B cell (primary cell): ENCODE measurements at regions of chr10 and their contacts with region 1.

Region 1: DNA sequence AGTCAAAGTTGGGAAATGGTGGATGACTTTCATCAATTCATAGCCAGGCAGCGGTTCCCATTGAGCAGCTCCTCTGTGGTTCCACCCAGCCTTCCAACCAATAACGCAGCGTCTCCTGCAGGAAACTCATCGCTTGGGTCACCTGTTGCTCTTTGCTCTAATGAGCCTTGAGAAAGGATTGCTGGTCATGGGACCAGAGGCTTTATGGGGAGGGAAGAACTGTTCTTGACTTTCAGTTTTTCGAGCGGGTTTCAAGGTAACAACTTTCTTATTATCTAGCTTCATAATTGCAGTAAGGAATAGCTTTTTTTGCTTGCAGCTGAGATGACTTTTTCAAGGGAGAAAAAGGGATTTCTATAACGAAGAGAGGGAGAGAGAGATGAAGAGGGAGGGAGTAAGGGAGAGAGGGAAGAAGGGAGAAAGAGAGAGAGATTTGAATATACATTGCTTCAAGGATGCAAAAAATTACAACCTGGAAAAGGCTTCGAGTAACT is 405 bp upstream of the ENTPD1 start:
- DNase-seq: peak; percentile 61
- ATAC-seq: no peak
- H3K4me3 ChIP-seq: peak overlapping the region; percentile 55 to 86 (median 68)
- H3K4me3 Mint-ChIP-seq: peak overlapping the region; percentile 99
- H3K27ac ChIP-seq: peak overlapping the region; percentile 58 to 94
- H3K27ac Mint-ChIP-seq: peak overlapping the region; percentile 97
- H3K4me1 ChIP-seq: peaks cover 49 to 52% of the 10 kb centered on the region in 2 donors
- H3K4me1 Mint-ChIP-seq: peaks cover 56% of the 10 kb centered on the region
- H3K27me3 ChIP-seq: no peaks in the 10 kb centered on the region
- H3K27me3 Mint-ChIP-seq: no peaks in the 10 kb centered on the region
- CTCF ChIP-seq: no peak

Region 2: DNA sequence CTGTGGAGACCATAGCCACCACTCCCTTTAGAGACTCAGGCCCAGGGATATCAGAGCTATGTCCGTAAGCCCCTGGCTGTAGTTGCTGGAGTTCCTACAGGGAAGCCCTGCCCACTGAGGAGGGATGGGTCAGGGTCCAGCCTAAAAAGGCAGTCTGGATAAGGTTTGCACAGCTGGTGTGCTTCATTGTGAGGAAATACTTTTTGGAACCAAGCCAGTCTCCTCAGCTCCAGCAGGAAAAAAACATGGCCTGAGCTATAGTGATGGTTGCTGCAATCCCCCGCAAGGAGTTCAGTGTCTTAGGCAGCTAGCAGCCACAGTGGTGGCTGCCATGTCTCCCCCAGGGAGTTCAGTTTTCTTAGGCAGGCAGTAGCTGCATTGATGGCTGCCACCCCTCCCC is 633.7 kb before region 1 on chr10:
- CTCF ChIA-PET with region 1: no interaction called
- POLR2A ChIA-PET with region 1: no interaction called
- intact Hi-C with region 1: no loop called
- DNase-seq: no peak
- ATAC-seq: no peak
- H3K4me3 ChIP-seq: no peak overlapping the region
- H3K4me3 Mint-ChIP-seq: no peak overlapping the region
- H3K27ac ChIP-seq: no peak overlapping the region
- H3K27ac Mint-ChIP-seq: no peak overlapping the region
- H3K4me1 ChIP-seq: no peaks in the 10 kb centered on the region
- H3K4me1 Mint-ChIP-seq: no peaks in the 10 kb centered on the region
- H3K27me3 ChIP-seq: peaks cover 0 to 11% (median 2%) of the 10 kb centered on the region in 4 experiments
- H3K27me3 Mint-ChIP-seq: peaks cover 45% of the 10 kb centered on the region
- CTCF ChIP-seq: no peak

Region 3: DNA sequence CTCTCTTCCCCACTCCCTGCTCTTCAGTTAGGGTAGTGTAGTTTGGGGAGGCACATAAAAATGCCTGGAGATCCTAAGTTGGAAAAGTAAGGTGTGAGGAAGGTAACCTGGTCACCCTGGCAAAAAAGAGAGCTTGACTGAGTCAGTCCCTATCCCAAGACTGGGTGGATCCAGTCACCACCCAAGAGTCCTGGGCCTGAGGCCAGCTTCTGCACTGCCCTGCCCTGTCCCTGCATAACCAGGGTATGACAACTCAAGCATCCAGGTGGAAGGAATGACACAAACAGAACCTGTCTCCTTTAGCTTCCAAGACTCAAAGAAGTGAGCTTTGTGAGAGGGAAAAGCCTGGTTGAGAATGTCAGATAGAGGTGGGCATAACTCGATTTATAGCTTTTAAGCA is 167.5 kb before region 1 on chr10:
- CTCF ChIA-PET with region 1: no interaction called
- POLR2A ChIA-PET with region 1: no interaction called
- intact Hi-C with region 1: no loop called
- DNase-seq: no peak
- ATAC-seq: no peak
- H3K4me3 ChIP-seq: no peak overlapping the region
- H3K4me3 Mint-ChIP-seq: no peak overlapping the region
- H3K27ac ChIP-seq: no peak overlapping the region
- H3K27ac Mint-ChIP-seq: no peak overlapping the region
- H3K4me1 ChIP-seq: no peaks in the 10 kb centered on the region
- H3K4me1 Mint-ChIP-seq: no peaks in the 10 kb centered on the region
- H3K27me3 ChIP-seq: peaks cover 0 to 8% (median 0%) of the 10 kb centered on the region in 4 experiments
- H3K27me3 Mint-ChIP-seq: peaks cover 9% of the 10 kb centered on the region
- CTCF ChIP-seq: no peak

Region 4: DNA sequence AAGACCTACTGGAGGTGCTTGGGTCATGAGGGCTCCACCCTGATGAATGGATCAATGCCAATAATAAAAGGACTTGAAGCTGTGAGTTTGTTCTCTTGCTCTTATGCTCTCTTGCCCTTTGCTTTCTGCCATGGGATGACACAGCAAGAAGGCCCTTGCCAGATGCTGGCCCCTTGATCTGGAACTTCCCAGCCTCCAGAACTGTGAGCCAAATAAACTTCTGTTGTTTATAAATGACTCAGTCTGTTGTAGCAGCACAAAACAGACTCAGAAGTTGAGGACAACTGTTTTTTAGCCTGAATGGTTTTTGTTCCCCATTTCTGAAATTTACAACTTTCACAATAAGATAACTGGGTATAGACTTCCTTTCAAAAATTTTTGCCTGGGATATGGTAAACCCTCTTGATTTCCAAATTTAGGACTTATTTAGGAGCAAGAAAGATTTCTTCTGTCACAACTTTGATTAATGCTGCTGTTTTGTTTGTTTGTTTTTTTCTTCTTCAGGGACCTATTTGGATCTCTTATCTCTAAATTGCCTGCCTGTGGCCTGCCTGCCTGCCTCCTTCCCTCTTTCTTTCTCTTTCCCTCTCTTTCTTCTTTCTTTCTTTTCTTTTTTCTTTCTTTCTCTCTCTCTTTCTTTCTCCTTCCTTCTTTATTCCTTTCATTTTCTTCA is 12.5 kb after region 1 on chr10:
- CTCF ChIA-PET with region 1: interaction called, 13 read pairs
- POLR2A ChIA-PET with region 1: interaction called, 12 read pairs
- intact Hi-C with region 1: loop called (anchors 1 kb)
- DNase-seq: peak; percentile 73
- ATAC-seq: peak; percentile 82
- H3K4me3 ChIP-seq: peak overlapping the region in 1 of 5 experiments; percentile 18
- H3K4me3 Mint-ChIP-seq: peak overlapping the region; percentile 66
- H3K27ac ChIP-seq: peak overlapping the region; percentile 72 to 90
- H3K27ac Mint-ChIP-seq: peak overlapping the region; percentile 95
- H3K4me1 ChIP-seq: peaks cover 50 to 64% of the 10 kb centered on the region in 2 donors
- H3K4me1 Mint-ChIP-seq: peaks cover 71% of the 10 kb centered on the region
- H3K27me3 ChIP-seq: no peaks in the 10 kb centered on the region
- H3K27me3 Mint-ChIP-seq: no peaks in the 10 kb centered on the region
- CTCF ChIP-seq: no peak

Region 5: DNA sequence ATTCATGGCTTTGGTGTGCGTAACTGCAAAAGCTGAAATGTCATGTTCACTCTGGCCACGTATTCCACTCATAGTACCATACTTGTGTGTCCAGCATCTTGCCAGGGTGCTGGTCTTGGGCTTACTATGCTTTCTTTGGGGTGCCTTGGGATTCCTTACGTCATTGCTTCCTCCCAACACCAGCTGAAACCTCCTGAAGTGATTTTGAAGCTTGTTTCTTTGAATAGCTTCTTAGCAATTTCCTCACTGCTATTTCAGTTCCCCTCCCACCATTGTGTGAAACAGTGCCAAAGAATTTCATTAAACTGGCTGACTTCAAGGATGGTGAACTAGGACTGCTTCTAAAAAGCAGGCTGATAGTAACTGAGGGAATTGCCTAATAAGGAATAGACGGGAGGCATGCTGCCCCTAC is 37.3 kb after region 1 on chr10:
- CTCF ChIA-PET with region 1: interaction called, 12 read pairs
- POLR2A ChIA-PET with region 1: interaction called, 5 read pairs
- intact Hi-C with region 1: loop called (anchors 2 kb)
- DNase-seq: peak; percentile 43
- ATAC-seq: no peak
- H3K4me3 ChIP-seq: peak overlapping the region in 1 of 5 experiments; percentile 21
- H3K4me3 Mint-ChIP-seq: peak overlapping the region; percentile 38
- H3K27ac ChIP-seq: peak overlapping the region; percentile 83 to 85
- H3K27ac Mint-ChIP-seq: peak overlapping the region; percentile 91
- H3K4me1 ChIP-seq: peaks cover 69 to 74% of the 10 kb centered on the region in 2 donors
- H3K4me1 Mint-ChIP-seq: peaks cover 87% of the 10 kb centered on the region
- H3K27me3 ChIP-seq: no peaks in the 10 kb centered on the region
- H3K27me3 Mint-ChIP-seq: no peaks in the 10 kb centered on the region
- CTCF ChIP-seq: no peak

Region 6: GRCh38 chr10:95832216-95833041 is 76.9 kb after region 1 on chr10:
- CTCF ChIA-PET with region 1: interaction called, 279 read pairs
- POLR2A ChIA-PET with region 1: interaction called, 47 read pairs
- intact Hi-C with region 1: loop called (anchors 1 kb)
- DNase-seq: peak; percentile 94
- ATAC-seq: peak; percentile 89
- H3K4me3 ChIP-seq: peak overlapping the region in 3 of 5 experiments; percentile 11 to 36 (median 23)
- H3K4me3 Mint-ChIP-seq: peak overlapping the region; percentile 83
- H3K27ac ChIP-seq: peak overlapping the region; percentile 89 to 95
- H3K27ac Mint-ChIP-seq: peak overlapping the region; percentile 96
- H3K4me1 ChIP-seq: peaks cover 82 to 87% of the 10 kb centered on the region in 2 donors
- H3K4me1 Mint-ChIP-seq: peaks cover 82% of the 10 kb centered on the region
- H3K27me3 ChIP-seq: no peaks in the 10 kb centered on the region
- H3K27me3 Mint-ChIP-seq: no peaks in the 10 kb centered on the region
- CTCF ChIP-seq: no peak

Region 7: DNA sequence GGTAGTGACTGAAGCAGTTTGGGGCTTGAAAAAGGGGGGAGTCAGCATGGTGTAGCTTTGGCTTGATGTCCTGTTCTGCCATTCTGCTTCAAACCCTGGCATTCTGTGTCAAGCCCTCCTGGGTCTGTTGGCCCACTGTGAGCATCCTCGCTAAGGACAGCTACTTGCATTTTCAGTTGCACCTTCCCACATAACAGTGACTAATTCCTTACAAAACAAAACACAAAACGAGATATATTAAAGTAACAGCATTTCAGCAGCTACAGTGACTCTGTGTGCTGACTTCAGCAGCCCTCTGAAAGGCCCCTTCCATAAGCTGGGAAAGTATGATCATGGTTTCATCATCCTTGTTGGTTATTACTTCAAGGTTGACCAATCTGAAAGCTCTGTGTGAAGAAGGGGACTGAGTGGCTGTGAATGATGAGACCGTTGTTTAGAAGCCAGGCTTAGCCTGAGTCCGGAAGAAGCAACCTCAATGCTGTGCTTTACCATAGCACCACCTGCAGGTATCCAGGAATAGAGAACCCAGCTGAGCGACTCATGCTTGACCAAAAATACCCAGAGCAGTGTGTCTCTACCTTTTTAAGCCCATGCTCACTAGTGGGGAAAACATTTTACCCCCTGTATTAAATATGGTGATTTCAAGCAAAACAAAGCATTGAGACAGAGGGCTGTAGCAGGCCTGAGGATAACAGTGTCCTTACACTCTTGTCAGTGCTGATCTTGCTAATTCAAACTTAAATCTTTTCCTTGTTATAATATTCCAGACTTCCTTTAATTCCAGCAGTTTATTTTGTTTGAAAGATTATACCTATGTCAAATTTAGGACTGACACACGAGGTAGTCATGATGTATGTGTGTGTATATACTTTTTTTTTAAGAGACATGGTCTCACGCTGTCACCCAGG is 109.6 kb after region 1 on chr10:
- CTCF ChIA-PET with region 1: interaction called, 37 read pairs
- POLR2A ChIA-PET with region 1: no interaction called
- intact Hi-C with region 1: no loop called
- DNase-seq: peak; percentile 83
- ATAC-seq: peak; percentile 99
- H3K4me3 ChIP-seq: no peak overlapping the region
- H3K4me3 Mint-ChIP-seq: no peak overlapping the region
- H3K27ac ChIP-seq: peak overlapping the region; percentile 26 to 75
- H3K27ac Mint-ChIP-seq: peak overlapping the region; percentile 88
- H3K4me1 ChIP-seq: peaks cover 11 to 13% of the 10 kb centered on the region in 2 donors
- H3K4me1 Mint-ChIP-seq: peaks cover 23% of the 10 kb centered on the region
- H3K27me3 ChIP-seq: no peaks in the 10 kb centered on the region
- H3K27me3 Mint-ChIP-seq: no peaks in the 10 kb centered on the region
- CTCF ChIP-seq: peak; percentile 88

Region 8: DNA sequence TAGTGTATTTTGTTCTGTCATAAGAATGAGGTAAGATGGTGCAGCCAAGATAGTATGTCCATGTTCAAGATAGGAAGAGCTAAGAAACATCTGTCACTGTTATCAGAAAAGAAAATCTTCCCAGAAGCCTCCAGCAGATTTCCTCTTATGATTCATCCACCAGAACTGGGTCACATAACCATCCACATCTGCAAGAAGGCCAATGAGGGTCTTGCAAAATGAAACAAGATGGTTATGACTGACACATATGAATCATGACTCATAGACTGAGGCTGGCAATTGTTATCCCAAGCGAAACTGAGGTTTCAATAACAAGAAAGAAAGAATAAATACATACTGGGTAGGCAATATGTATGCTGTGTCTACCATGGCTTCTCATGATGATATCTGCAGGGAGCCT is 318.2 kb after region 1 on chr10:
- CTCF ChIA-PET with region 1: no interaction called
- POLR2A ChIA-PET with region 1: no interaction called
- intact Hi-C with region 1: no loop called
- DNase-seq: no peak
- ATAC-seq: no peak
- H3K4me3 ChIP-seq: no peak overlapping the region
- H3K4me3 Mint-ChIP-seq: no peak overlapping the region
- H3K27ac ChIP-seq: no peak overlapping the region
- H3K27ac Mint-ChIP-seq: no peak overlapping the region
- H3K4me1 ChIP-seq: no peaks in the 10 kb centered on the region
- H3K4me1 Mint-ChIP-seq: no peaks in the 10 kb centered on the region
- H3K27me3 ChIP-seq: no peaks in the 10 kb centered on the region
- H3K27me3 Mint-ChIP-seq: no peaks in the 10 kb centered on the region
- CTCF ChIP-seq: no peak